ENCODE measurements at regions of chr1 and their contacts with region 1.

Region 1: GRCh38 chr1:110619412-110620249 is 13.5 kb upstream of the KCNA2 start:
- DNase-seq: peak; percentile 93
- H3K4me3 Mint-ChIP-seq: peak overlapping the region; percentile 75
- H3K27ac Mint-ChIP-seq: peak overlapping the region; percentile 79
- H3K4me1 Mint-ChIP-seq: peaks cover 25% of the 10 kb centered on the region
- H3K27me3 Mint-ChIP-seq: no peaks in the 10 kb centered on the region

Region 2: GRCh38 chr1:110524311-110525251 is 95.0 kb before region 1 on chr1:
- CTCF ChIA-PET with region 1: interaction called, 59 read pairs
- POLR2A ChIA-PET with region 1: no interaction called
- intact Hi-C with region 1: loop called (anchors 1 kb)
- DNase-seq: peak; percentile 65
- H3K4me3 Mint-ChIP-seq: no peak overlapping the region
- H3K27ac Mint-ChIP-seq: no peak overlapping the region
- H3K4me1 Mint-ChIP-seq: peaks cover 5% of the 10 kb centered on the region
- H3K27me3 Mint-ChIP-seq: peaks cover 17% of the 10 kb centered on the region

Region 3: GRCh38 chr1:110554871-110555801 is 64.5 kb before region 1 on chr1:
- CTCF ChIA-PET with region 1: interaction called, 16 read pairs
- POLR2A ChIA-PET with region 1: no interaction called
- intact Hi-C with region 1: loop called (anchors 5 kb)
- DNase-seq: peak; percentile 71
- H3K4me3 Mint-ChIP-seq: no peak overlapping the region
- H3K27ac Mint-ChIP-seq: no peak overlapping the region
- H3K4me1 Mint-ChIP-seq: peaks cover 4% of the 10 kb centered on the region
- H3K27me3 Mint-ChIP-seq: peaks cover 42% of the 10 kb centered on the region

Region 4: GRCh38 chr1:110605901-110606656 is 13.6 kb before region 1 on chr1 and contains the start of gene KCNA2:
- CTCF ChIA-PET with region 1: interaction called, 67 read pairs
- POLR2A ChIA-PET with region 1: no interaction called
- intact Hi-C with region 1: no loop called
- DNase-seq: no peak
- H3K4me3 Mint-ChIP-seq: peak within 1 kb of the TSS; percentile 74
- H3K27ac Mint-ChIP-seq: no peak within 1 kb of the TSS
- H3K4me1 Mint-ChIP-seq: peaks cover 17% of the 10 kb centered on the region
- H3K27me3 Mint-ChIP-seq: peaks cover 44% of the 10 kb centered on the region
- total RNA-seq, gene KCNA2: 0.24 to 0.36 TPM

Region 5: DNA sequence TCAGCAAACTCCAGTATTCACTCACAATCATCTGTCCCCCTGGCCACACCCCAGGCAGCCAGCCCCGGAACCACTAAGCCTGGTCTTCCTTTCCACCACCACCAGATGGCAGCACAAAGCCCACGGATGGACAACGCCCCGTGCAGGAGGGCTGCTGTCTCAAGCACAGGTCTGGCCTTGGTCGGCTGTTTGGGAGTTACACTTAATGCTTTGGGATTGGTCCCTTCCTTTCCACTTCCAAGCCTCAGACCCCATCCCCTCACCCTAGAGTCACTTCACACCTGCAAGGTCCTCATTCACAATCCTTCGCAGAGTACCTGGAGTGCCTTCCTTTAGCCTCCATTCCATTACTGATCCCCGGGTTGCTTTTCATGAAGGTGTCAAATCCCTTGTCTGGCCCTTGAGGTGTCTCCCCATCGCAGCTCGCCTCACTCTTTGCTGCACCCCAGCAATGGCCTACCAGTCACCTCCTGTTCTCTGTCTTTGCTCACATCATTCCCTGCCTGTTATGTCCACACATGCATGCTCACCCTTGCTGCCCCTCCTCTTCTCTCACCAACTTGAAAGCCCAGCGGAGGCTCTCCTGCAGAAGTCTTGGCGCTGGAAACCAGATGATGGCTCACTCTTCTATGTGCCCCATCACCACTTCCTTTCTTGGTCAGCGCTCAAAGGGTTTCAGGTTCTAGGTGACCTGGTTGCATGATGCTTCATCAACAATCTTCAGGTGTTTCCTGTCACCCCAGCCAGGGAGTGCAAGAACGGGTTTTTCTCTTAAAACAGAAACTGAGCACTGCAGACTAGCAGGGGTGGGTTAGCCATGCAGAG is 11.4 kb after region 1 on chr1:
- CTCF ChIA-PET with region 1: interaction called, 48 read pairs
- POLR2A ChIA-PET with region 1: interaction called, 10 read pairs
- intact Hi-C with region 1: loop called (anchors 1 kb)
- DNase-seq: peak; percentile 92
- H3K4me3 Mint-ChIP-seq: no peak overlapping the region
- H3K27ac Mint-ChIP-seq: no peak overlapping the region
- H3K4me1 Mint-ChIP-seq: peaks cover 66% of the 10 kb centered on the region
- H3K27me3 Mint-ChIP-seq: no peaks in the 10 kb centered on the region

Region 6: GRCh38 chr1:110756506-110756905 is 136.9 kb after region 1 on chr1:
- CTCF ChIA-PET with region 1: interaction called, 28 read pairs
- POLR2A ChIA-PET with region 1: no interaction called
- intact Hi-C with region 1: no loop called
- DNase-seq: no peak
- H3K4me3 Mint-ChIP-seq: no peak overlapping the region
- H3K27ac Mint-ChIP-seq: no peak overlapping the region
- H3K4me1 Mint-ChIP-seq: no peaks in the 10 kb centered on the region
- H3K27me3 Mint-ChIP-seq: peaks cover 5% of the 10 kb centered on the region

Region 7: DNA sequence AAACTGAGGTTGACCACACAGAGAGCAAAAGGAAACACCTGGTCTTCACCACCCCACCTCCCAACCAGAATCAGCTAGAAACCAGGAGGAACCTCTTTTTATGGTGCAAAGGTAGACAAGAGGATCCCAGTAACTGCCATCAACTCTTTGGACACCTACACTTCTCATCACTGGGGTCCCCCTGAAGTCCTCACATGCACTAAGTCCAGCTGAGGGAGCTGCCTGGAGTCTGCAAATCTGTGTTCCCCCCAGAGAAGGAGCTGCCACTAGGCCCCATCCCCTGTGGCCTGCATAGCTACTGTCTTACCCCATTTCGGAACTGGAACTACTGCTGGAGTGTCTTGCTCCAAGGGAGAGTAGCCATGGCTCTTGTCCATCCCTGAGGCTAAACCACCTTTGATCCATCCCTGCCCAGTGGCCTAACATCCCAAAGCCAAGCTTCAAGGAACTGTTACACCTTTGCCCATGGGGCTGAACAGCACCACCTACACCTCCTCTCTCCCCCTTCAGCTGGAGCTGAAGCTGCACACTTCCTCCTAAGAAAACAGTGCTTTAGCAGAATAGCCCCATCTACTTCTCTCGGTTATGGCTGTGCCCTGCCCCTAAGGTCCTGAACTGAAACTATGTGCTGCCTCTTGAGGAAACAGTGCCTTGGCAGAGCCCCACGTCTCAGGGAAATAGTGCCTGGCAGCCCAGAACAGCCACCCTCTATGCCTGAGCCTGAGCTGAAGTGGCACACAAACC is 167.9 kb after region 1 on chr1:
- CTCF ChIA-PET with region 1: interaction called, 240 read pairs
- POLR2A ChIA-PET with region 1: no interaction called
- intact Hi-C with region 1: loop called (anchors 1 kb)
- DNase-seq: peak; percentile 38
- H3K4me3 Mint-ChIP-seq: no peak overlapping the region
- H3K27ac Mint-ChIP-seq: peak overlapping the region; percentile 66
- H3K4me1 Mint-ChIP-seq: peaks cover 50% of the 10 kb centered on the region
- H3K27me3 Mint-ChIP-seq: no peaks in the 10 kb centered on the region

Measured in activated CD4-positive, alpha-beta memory T cell treated with anti-CD3 and anti-CD28 coated beads for 36 hours (primary cell).